ENCODE measurements at regions of chr3 and their contacts with region 1.

Region 1: DNA sequence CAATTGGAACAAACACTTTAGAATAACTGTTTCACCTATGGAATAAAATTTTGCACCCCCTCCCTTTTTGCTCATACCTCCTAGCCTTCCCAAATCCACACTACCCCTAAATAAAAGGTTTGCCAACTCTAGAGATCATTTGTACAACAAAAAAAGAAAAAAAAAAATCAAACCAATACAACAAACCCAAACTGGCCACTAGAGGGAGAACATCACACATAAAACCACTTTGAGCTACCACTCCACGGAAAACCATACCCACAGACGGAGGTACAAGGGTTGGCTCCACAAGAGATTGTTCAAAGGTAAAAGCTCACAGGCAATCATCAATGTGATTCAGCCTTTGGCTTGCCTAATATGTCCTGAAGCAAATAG is 47.6 kb downstream of the SETMAR start:
- DNase-seq: peak in 1 of 2 donors; percentile 68
- H3K4me3 ChIP-seq: peak overlapping the region; percentile 45 to 60
- H3K27ac ChIP-seq: peak overlapping the region; percentile 88 to 92
- H3K4me1 ChIP-seq: peaks cover 0 to 3% of the 10 kb centered on the region in 2 donors
- H3K27me3 ChIP-seq: no peaks in the 10 kb centered on the region
- CTCF ChIP-seq: peak; percentile 58 to 76 (median 67)

Region 2: GRCh38 chr3:4406746-4407568 is 56.2 kb after region 1 on chr3:
- intact Hi-C with region 1: loop called (anchors 5 kb)
- DNase-seq: no peak
- H3K4me3 ChIP-seq: no peak overlapping the region
- H3K27ac ChIP-seq: no peak overlapping the region
- H3K4me1 ChIP-seq: peaks cover 0 to 8% of the 10 kb centered on the region in 2 donors
- H3K27me3 ChIP-seq: no peaks in the 10 kb centered on the region
- CTCF ChIP-seq: no peak

Region 3: GRCh38 chr3:4466741-4467521 is 116.2 kb after region 1 on chr3 and contains the start of gene SUMF1:
- intact Hi-C with region 1: loop called (anchors 5 kb)
- DNase-seq: peak; percentile 46 to 90
- H3K4me3 ChIP-seq: peak within 1 kb of the TSS; percentile 70
- H3K27ac ChIP-seq: peak within 1 kb of the TSS; percentile 48 to 75
- H3K4me1 ChIP-seq: peaks cover 4 to 11% of the 10 kb centered on the region in 2 donors
- H3K27me3 ChIP-seq: no peaks in the 10 kb centered on the region
- CTCF ChIP-seq: no peak
- total RNA-seq, gene SUMF1: 98.4 TPM

Region 4: GRCh38 chr3:4551051-4551711 is 200.4 kb after region 1 on chr3:
- intact Hi-C with region 1: no loop called
- DNase-seq: no peak
- H3K4me3 ChIP-seq: no peak overlapping the region
- H3K27ac ChIP-seq: peak overlapping the region; percentile 29 to 46
- H3K4me1 ChIP-seq: no peaks in the 10 kb centered on the region
- H3K27me3 ChIP-seq: no peaks in the 10 kb centered on the region
- CTCF ChIP-seq: no peak

Region 5: DNA sequence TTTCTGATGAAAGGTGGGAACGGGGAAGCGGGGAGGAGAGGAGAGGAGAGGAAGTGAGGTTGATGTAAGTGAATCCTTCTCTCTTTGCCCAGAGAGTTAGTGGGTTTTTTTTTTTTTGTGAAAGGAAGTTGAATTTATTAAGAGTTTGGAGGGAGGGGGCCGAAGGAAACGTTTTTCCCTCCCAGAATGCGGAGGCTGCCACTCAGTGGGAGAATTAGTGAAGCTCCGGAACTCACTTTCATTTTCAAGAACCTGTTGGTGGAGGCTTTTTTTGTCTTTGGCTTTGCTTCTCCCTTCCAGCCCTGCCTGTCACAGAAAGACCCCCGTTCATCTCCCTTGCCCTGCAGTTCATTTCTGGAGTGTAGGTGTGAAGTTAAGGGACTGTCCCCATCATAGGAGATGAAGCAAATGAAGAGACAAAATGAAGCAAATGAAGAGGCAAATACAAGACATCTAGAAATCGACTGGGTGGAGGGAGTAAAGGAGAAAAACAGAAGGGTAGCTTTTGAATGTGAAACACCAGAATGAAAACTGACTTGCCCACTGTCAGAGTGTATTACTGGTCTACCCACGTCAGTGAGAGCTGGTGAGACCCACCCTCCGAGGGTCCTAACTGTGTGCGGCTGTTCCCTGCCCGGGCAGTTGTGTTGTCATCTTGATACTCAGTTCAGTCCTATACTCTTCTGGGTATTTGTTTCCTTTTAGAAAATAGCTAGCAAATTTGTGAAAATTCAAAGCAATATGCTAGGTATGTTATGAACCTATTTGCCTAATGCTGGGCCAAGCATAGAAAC is 233.9 kb after region 1 on chr3:
- intact Hi-C with region 1: loop called (anchors 5 kb)
- DNase-seq: no peak
- H3K4me3 ChIP-seq: peak overlapping the region; percentile 43 to 57
- H3K27ac ChIP-seq: peak overlapping the region; percentile 84 to 86
- H3K4me1 ChIP-seq: peaks cover 0 to 41% of the 10 kb centered on the region in 2 donors
- H3K27me3 ChIP-seq: no peaks in the 10 kb centered on the region
- CTCF ChIP-seq: peak in 2 of 3 experiments; percentile 39 to 55

Region 6: DNA sequence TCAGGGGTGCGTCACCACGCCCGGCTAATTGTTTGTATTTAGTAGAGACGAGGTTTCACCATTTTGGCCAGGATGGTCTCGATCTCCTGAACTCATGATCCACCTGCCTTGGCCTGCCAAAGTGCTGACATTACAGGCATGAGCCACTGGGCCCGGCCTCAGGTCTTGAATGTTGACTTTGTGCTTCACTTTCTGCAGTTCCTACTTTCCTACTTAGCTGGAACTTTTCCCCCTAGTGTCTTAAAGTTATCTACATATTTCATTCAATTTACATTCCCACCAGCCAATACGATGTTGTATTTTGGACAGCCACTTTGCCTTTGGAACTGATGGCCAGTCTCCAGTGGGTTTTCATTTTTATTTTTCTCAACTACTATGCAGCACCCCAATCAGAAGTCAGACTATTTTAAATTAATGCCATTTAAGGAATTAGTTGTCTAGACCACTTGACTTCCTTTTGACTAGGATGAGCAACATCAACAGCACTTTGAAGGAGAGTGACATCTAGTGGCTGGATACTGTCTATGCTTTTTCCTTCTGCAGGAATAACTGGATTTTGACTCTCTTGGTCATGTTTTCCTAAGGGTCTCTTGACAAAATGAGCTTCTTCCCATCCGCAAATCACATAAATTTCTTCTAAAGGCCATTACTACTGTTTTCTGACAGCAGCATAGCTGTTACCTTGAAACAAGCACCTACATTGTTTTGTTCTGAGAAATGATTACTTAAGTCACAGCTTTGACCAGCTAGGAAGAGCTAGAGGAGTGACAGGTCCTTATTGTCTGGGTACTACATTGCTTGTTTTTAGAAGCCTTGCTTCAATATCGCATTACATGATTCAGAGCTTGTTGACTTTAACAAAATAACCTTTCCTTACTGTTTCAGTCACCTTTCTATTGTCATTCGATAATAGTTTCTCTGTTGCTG is 282.6 kb after region 1 on chr3:
- intact Hi-C with region 1: loop called (anchors 1 kb)
- DNase-seq: no peak
- H3K4me3 ChIP-seq: no peak overlapping the region
- H3K27ac ChIP-seq: peak overlapping the region in 1 of 2 donors; percentile 40
- H3K4me1 ChIP-seq: no peaks in the 10 kb centered on the region
- H3K27me3 ChIP-seq: no peaks in the 10 kb centered on the region
- CTCF ChIP-seq: peak; percentile 73 to 81 (median 78)